Dorsolateral prefrontal cortex (tissue), 120 donors: ENCODE measurements at regions of chr17 and their contacts with region 1.

Region 1: DNA sequence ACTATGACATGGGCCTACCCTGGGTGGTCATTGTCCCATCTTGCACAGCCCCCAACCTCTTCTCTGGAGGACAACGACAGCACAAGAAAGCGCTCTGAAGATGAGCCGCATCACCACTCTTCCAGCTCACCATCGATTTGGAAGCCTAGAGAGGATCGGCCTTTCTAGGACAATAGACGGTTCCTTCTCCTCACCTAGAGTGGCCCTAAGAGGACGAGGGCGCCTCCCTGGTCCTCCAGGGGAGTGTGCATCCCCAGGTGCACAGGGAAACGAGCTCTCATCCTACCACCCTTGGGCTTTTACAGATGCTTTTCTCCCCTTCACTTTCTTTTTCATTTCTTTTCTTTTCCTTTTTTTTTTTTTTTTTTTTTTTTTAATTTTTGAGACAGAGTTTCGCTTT is 20.3 kb upstream of the SLC52A1 start:
- DNase-seq: no peak
- H3K4me3 ChIP-seq: no peak overlapping the region
- H3K27ac ChIP-seq: no peak overlapping the region
- H3K27me3 ChIP-seq: no peaks in the 10 kb centered on the region
- CTCF ChIP-seq: no peak

Region 2: DNA sequence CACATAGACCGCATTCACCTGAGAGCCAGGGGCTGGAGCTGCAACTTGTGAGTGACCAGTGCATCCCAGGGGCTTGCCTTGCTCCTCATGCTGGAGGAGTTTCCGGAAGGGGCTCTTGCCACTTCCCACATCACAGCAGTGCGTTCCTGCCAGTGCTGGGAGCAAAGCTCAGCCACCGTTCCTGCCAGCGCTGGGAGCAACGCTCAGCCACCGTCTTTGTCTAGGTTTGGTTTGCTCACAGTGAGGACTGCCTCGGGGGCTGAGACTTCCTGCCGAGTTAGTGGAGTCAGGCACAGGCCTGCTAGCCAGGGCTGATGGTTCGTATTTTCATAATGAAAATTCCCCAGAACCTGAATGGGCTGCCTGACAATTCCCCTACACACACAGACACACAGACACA is 147.2 kb before region 1 on chr17:
- intact Hi-C with region 1: loop called in 1 of 2 experiments (anchors 5 kb)
- DNase-seq: no peak
- H3K4me3 ChIP-seq: no peak overlapping the region
- H3K27ac ChIP-seq: peak overlapping the region in 1 of 59 donors; percentile 17
- H3K27me3 ChIP-seq: no peaks in the 10 kb centered on the region
- CTCF ChIP-seq: no peak

Region 3: GRCh38 chr17:5023588-5024147 is 31.9 kb before region 1 on chr17:
- intact Hi-C with region 1: loop called (anchors 5 kb)
- DNase-seq: no peak
- H3K4me3 ChIP-seq: no peak overlapping the region
- H3K27ac ChIP-seq: no peak overlapping the region
- H3K27me3 ChIP-seq: no peaks in the 10 kb centered on the region
- CTCF ChIP-seq: no peak